HepG2 (cell line): ENCODE measurements at regions of chr16 and their contacts with region 1.

Region 1: GRCh38 chr16:85610508-85611332 is 2.4 kb upstream of the GSE1 start:
- DNase-seq: peak; percentile 82
- ATAC-seq: peak; percentile 53
- H3K4me3 ChIP-seq: peak overlapping the region; percentile 70 to 82 (median 76)
- H3K27ac ChIP-seq: peak overlapping the region; percentile 84
- H3K4me1 ChIP-seq: peaks cover 25% of the 10 kb centered on the region
- H3K27me3 ChIP-seq: no peaks in the 10 kb centered on the region
- CTCF ChIP-seq: peak; percentile 97
- EP300 ChIP-seq: 0 out of 4 replicates have a peak, but pooled peaks have one; percentile 3 to 31
- POLR2A ChIP-seq: no peak
- RAD21 ChIP-seq: peak; percentile 99

Region 2: DNA sequence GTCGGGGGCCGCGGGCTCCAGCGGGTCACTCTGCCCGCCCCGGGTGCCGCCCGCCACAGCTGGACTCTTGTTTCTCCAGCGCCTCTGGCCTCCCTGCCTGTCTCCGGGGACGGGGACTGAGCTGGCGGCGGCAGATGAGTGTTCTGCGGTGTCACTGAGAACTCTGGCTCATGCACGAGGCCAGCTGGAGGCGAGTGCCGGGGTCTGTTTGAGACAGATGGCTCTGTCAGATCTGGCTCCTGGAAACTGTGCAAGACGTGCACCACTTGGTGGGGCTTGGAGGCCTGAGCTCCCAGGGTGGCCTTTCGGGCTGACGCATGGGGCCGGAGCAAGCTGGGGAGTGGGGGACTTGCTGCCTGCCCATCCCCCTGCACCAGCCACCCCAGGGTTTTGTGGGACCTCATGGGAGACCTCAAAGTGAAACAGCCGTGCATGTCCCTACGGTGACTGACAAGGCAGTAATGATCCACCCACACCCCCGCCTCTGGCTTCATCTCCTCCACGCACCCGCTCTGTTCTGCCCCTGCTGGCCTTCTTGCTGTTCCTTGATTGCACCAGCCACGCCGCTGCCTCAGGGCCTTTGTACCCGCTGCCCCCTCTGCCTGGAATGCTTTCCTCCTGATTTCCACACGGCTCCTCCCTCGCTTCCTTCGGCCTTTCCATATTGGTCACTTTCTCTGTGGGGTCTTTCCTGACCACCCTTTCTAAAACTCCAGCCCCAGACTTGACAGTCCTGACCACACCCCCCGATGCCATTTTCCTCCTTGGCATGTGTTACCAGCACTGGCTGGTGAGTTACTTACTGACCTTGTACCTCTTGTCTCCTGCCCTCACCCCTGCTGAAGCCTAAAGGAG is 323.5 kb before region 1 on chr16:
- CTCF ChIA-PET with region 1: no interaction called
- POLR2A ChIA-PET with region 1: interaction called, 14 read pairs
- in situ Hi-C with region 1: no loop called
- intact Hi-C with region 1: no loop called
- DNase-seq: no peak
- ATAC-seq: no peak
- H3K4me3 ChIP-seq: no peak overlapping the region
- H3K27ac ChIP-seq: no peak overlapping the region
- H3K4me1 ChIP-seq: peaks cover 64% of the 10 kb centered on the region
- H3K27me3 ChIP-seq: no peaks in the 10 kb centered on the region; a peak in 1 of 5 replicates
- CTCF ChIP-seq: no peak
- EP300 ChIP-seq: no peak
- POLR2A ChIP-seq: no peak
- RAD21 ChIP-seq: no peak

Region 3: GRCh38 chr16:85420501-85421337 is 190.0 kb before region 1 on chr16:
- CTCF ChIA-PET with region 1: interaction called, 93 read pairs
- POLR2A ChIA-PET with region 1: interaction called, 10 read pairs
- in situ Hi-C with region 1: no loop called
- intact Hi-C with region 1: loop called (anchors 2 kb)
- DNase-seq: peak; percentile 35
- ATAC-seq: peak; percentile 50
- H3K4me3 ChIP-seq: peak overlapping the region in 1 of 3 experiments; percentile 65; a peak in 1 of 6 replicates
- H3K27ac ChIP-seq: no peak overlapping the region
- H3K4me1 ChIP-seq: peaks cover 46% of the 10 kb centered on the region
- H3K27me3 ChIP-seq: peaks cover 5 to 18% of the 10 kb centered on the region in 2 experiments; a peak in 4 of 5 replicates
- CTCF ChIP-seq: peak; percentile 100
- EP300 ChIP-seq: peak; percentile 35 to 67; a peak in 3 of 4 replicates
- POLR2A ChIP-seq: no peak
- RAD21 ChIP-seq: peak; percentile 100

Region 4: DNA sequence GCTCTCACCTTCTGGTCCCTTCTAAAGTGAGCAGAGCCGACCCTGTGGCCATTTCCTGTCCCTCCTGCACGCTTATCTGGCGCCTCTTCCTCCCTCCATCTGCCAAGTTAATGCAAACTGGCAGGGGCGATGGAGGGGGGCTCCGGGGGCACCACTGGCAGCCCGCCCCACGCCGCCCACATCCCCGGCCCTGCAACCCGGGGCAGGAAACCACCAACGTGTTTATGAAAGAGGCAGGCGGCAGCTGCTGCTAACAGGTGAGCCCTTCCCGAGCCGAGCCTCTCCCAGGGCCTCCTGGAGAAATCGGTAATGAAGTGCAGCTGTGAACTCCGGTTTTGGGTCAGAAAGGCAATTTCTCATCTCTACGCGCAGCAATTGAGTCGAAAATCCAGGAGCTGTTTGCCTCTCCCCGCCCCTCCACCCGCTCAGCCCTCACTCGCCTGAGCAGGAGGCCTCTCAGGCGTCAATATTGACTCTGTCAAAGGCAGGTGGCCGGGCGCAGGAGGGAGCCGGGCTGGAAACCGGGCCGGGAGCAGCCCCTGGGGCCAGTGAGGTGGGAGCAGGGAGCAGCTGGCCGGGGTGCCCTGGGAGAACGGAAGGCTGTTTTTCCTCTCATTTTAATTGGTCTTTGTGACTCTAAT is 162.0 kb before region 1 on chr16:
- CTCF ChIA-PET with region 1: no interaction called
- POLR2A ChIA-PET with region 1: no interaction called
- in situ Hi-C with region 1: loop called (anchors 5 kb)
- intact Hi-C with region 1: loop called (anchors 2 kb)
- DNase-seq: peak; percentile 79
- ATAC-seq: peak; percentile 91
- H3K4me3 ChIP-seq: peak overlapping the region in 2 of 3 experiments; percentile 21 to 59; a peak in 3 of 6 replicates
- H3K27ac ChIP-seq: peak overlapping the region; percentile 68
- H3K4me1 ChIP-seq: peaks cover 59% of the 10 kb centered on the region
- H3K27me3 ChIP-seq: peaks cover 5 to 59% of the 10 kb centered on the region in 2 experiments
- CTCF ChIP-seq: peak; percentile 44; the same call in 1 of the 2 replicates
- EP300 ChIP-seq: peak in 1 of 2 experiments; percentile 85; a peak in 2 of 4 replicates
- POLR2A ChIP-seq: no peak
- RAD21 ChIP-seq: peak; percentile 20; the same call in 1 of the 2 replicates

Region 5: DNA sequence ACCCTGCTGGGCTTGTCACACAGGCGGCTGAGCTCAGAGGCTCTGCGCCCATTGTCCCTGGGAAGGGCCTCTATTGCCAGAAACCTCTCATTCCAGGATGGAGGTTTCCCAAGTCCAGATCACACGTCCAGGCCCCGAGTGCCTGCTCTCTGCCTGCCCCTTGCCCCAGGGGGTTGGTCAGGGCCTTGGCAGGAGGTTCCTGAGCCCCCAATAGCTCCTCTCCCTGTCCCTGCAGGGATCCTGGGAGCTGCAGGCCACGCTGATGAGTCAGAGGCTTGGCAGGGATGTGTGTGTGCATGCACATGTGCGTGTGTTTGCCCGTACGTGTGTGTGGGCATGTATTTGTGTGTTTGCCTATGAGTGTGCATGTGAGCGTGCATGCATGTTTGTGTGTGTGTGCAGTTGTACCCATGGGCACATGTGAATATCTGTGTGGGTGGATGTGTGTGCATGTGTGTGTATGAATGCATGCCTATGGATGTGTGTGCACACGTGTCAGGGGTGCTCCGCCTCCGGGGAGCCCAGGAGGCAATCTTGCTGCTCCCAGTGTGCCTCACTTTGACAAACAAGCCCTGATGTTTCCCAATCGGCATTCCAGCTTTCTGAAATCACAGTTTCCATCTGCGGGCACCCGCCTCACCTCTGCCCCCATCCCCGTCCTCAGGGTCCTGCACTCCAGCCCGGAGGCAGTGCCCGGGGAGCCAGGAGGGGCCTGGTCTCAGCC is 96.0 kb before region 1 on chr16:
- CTCF ChIA-PET with region 1: no interaction called
- POLR2A ChIA-PET with region 1: interaction called, 34 read pairs
- in situ Hi-C with region 1: no loop called
- intact Hi-C with region 1: no loop called
- DNase-seq: peak; percentile 99
- ATAC-seq: peak; percentile 79
- H3K4me3 ChIP-seq: peak overlapping the region; percentile 55 to 73 (median 61); a peak in 5 of 6 replicates
- H3K27ac ChIP-seq: peak overlapping the region; percentile 91
- H3K4me1 ChIP-seq: peaks cover 45% of the 10 kb centered on the region
- H3K27me3 ChIP-seq: no peaks in the 10 kb centered on the region
- CTCF ChIP-seq: peak; percentile 63
- EP300 ChIP-seq: peak; percentile 92 to 97
- POLR2A ChIP-seq: peak in 1 of 2 experiments; percentile 40; a peak in 2 of 4 replicates
- RAD21 ChIP-seq: peak; percentile 74

Region 6: DNA sequence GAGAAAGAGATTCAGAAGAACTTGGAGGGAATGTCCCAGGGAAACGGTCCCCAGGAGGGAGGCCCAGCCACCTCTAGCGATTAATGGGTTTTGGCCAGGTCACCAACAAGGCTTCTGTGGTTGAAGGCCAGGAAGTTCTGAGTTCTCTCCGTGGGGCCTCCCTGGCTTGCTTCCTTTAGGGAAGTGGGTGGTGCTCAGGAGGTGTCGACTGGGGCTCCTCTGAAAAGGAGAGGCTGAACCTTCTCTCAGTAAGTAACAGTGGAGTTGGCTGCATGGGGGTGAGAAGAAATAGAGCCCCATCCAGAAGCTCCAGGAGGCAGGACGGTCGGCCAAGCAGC is 74.7 kb before region 1 on chr16:
- CTCF ChIA-PET with region 1: no interaction called
- POLR2A ChIA-PET with region 1: interaction called, 15 read pairs
- in situ Hi-C with region 1: no loop called
- intact Hi-C with region 1: no loop called
- DNase-seq: no peak
- ATAC-seq: no peak
- H3K4me3 ChIP-seq: peak overlapping the region; percentile 35 to 74 (median 51); a peak in 5 of 6 replicates
- H3K27ac ChIP-seq: peak overlapping the region; percentile 90
- H3K4me1 ChIP-seq: peaks cover 100% of the 10 kb centered on the region
- H3K27me3 ChIP-seq: no peaks in the 10 kb centered on the region
- CTCF ChIP-seq: no peak
- EP300 ChIP-seq: no peak
- POLR2A ChIP-seq: no peak
- RAD21 ChIP-seq: no peak

Region 7: DNA sequence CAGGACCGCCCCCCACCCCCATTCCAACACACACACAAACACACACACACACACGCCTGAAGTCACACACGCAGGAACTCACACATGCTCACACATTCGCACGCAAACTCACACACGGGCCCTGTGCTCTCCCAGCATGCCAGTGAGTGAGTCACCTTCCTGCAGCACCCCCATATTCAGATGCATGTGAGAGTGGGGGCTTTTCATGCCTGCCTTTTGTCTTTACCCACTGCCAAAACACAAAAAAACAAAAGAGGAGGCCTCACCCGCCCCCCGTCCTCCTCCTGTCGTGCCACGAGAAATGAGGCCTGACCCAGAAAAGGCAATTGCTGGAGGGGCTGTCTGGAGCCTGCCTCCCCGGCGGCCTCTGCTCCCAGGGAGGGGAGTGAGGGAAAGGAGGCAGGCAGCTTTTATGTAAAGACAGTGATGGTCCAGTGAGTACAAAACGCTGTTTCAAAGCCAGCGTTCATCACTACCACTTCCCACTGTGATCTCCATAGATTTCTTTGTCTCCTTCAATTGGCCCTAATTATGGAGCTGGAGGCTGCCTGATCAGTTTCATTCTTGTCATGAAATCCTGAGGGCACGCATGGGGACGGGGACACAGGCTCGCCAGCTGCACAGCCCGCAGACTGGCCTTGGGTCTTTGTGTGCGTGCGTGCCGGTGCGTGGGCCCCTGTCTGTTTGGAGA is 27.1 kb before region 1 on chr16:
- CTCF ChIA-PET with region 1: no interaction called
- POLR2A ChIA-PET with region 1: no interaction called
- in situ Hi-C with region 1: no loop called
- intact Hi-C with region 1: no loop called
- DNase-seq: no peak
- ATAC-seq: no peak
- H3K4me3 ChIP-seq: no peak overlapping the region
- H3K27ac ChIP-seq: no peak overlapping the region
- H3K4me1 ChIP-seq: peaks cover 14% of the 10 kb centered on the region
- H3K27me3 ChIP-seq: no peaks in the 10 kb centered on the region
- CTCF ChIP-seq: no peak
- EP300 ChIP-seq: no peak
- POLR2A ChIP-seq: no peak
- RAD21 ChIP-seq: no peak

Region 8: GRCh38 chr16:85593494-85594221 is 17.1 kb before region 1 on chr16:
- CTCF ChIA-PET with region 1: no interaction called
- POLR2A ChIA-PET with region 1: no interaction called
- in situ Hi-C with region 1: no loop called
- intact Hi-C with region 1: no loop called
- DNase-seq: no peak
- ATAC-seq: no peak
- H3K4me3 ChIP-seq: no peak overlapping the region
- H3K27ac ChIP-seq: no peak overlapping the region
- H3K4me1 ChIP-seq: peaks cover 6% of the 10 kb centered on the region; the same call in 1 of the 2 replicates
- H3K27me3 ChIP-seq: no peaks in the 10 kb centered on the region
- CTCF ChIP-seq: no peak
- EP300 ChIP-seq: no peak
- POLR2A ChIP-seq: no peak
- RAD21 ChIP-seq: no peak

Region 9: GRCh38 chr16:85621698-85622428 is 11.1 kb after region 1 on chr16:
- CTCF ChIA-PET with region 1: no interaction called
- POLR2A ChIA-PET with region 1: interaction called, 29 read pairs
- in situ Hi-C with region 1: no loop called
- intact Hi-C with region 1: no loop called
- DNase-seq: peak; percentile 95
- ATAC-seq: peak; percentile 84
- H3K4me3 ChIP-seq: peak overlapping the region in 1 of 3 experiments; percentile 27; a peak in 2 of 6 replicates
- H3K27ac ChIP-seq: peak overlapping the region; percentile 27
- H3K4me1 ChIP-seq: peaks cover 47% of the 10 kb centered on the region
- H3K27me3 ChIP-seq: no peaks in the 10 kb centered on the region
- CTCF ChIP-seq: no peak
- EP300 ChIP-seq: peak in 1 of 2 experiments; percentile 68; a peak in 2 of 4 replicates
- POLR2A ChIP-seq: no peak
- RAD21 ChIP-seq: 0 out of 2 replicates have a peak, but pooled peaks have one; percentile 17